ENCODE measurements at regions of chr5 and their contacts with region 1.

Region 1: GRCh38 chr5:115841382-115842088 is at the starts of genes AP3S1 and ATG12:
- DNase-seq: peak; percentile 95
- H3K4me3 ChIP-seq: peak within 1 kb of the TSS; percentile 90
- H3K27ac ChIP-seq: peak within 1 kb of the TSS; percentile 80
- H3K4me1 ChIP-seq: peaks cover 57% of the 10 kb centered on the region
- CTCF ChIP-seq: no peak
- total RNA-seq, gene AP3S1: 76.0 and 111 TPM in 2 replicates
- total RNA-seq, gene ATG12: 38.0 and 52.1 TPM in 2 replicates

Region 2: GRCh38 chr5:115296124-115297022 is 545.2 kb before region 1 on chr5 and contains the start of gene CCDC112:
- CTCF ChIA-PET with region 1: no interaction called
- POLR2A ChIA-PET with region 1: no interaction called
- intact Hi-C with region 1: loop called (anchors 5 kb)
- DNase-seq: peak; percentile 79
- H3K4me3 ChIP-seq: peak within 1 kb of the TSS; percentile 83
- H3K27ac ChIP-seq: peak within 1 kb of the TSS; percentile 1
- H3K4me1 ChIP-seq: peaks cover 14% of the 10 kb centered on the region
- CTCF ChIP-seq: no peak
- total RNA-seq, gene CCDC112: 15.8 and 32.8 TPM in 2 replicates

Region 3: DNA sequence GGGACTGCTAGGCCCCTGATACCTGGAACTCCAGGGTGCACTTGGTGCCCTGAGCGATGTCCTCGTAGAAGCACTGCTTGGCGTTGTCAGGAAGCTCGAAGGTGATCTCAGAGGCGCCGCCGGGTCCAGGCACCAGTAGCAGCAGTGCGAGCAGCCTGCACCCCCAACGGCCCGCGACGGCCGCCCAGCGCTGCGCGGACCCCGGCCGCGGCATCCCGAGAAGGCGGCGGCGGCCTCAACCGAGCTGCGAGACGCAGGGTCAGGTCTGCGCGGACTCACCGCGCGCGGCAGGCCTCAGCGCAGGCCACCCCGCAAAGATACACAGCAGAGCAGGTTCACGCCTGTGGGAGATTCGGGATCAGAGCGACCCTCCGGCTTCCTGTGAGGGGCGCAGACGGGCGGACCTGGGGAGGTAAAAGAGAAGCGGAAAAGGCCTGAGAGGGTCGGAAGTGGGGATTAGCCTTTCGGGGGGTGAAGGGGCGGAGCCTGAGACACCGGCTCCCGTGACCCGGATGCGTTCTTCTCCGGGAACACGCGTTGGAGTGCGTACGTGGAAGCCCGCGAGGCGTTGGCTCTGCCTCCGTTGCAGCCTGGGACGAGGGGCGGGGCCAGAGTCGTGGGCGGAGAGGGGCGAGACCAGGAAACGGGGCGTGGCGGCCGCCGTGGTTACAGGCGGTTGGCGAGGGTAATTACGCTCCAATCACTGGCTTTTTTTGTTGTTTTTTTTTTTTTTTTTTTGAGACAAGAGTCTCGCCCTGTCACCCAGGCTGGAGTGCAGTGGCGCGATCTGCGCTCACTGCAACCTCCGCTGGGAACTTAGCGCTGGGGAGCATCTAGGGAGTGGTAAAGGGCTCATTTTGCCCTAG is 215.7 kb before region 1 on chr5 and contains the start of gene TMED7:
- CTCF ChIA-PET with region 1: no interaction called
- POLR2A ChIA-PET with region 1: interaction called, 6 read pairs
- intact Hi-C with region 1: loop called (anchors 2 kb)
- DNase-seq: peak; percentile 98
- H3K4me3 ChIP-seq: peak within 1 kb of the TSS; percentile 94
- H3K27ac ChIP-seq: peak within 1 kb of the TSS; percentile 70
- H3K4me1 ChIP-seq: peaks cover 39% of the 10 kb centered on the region
- CTCF ChIP-seq: 0 out of 2 replicates have a peak, but pooled peaks have one; percentile 17
- total RNA-seq, gene TMED7: 50.9 and 55.1 TPM in 2 replicates

Region 4: DNA sequence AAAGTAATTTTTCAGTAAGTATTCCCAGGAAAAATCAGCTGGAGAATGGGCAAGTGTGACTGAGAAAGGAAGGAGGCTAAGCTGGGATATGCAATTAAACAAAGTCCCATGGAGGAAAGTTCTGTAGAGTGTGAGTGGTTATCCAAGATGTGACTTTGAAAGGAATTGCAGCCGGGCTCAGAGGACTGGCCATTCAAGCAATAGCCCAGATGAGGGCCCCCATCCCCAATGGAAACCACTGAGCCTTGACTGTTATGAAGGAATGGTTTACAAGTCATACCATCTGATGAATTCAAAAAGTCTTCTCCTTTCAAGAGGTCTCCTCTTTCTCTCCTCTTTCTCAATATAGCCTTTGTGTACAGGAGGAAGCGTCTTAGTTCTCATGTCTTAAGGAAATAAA is 127.2 kb after region 1 on chr5:
- CTCF ChIA-PET with region 1: no interaction called
- POLR2A ChIA-PET with region 1: no interaction called
- intact Hi-C with region 1: no loop called
- DNase-seq: no peak
- H3K4me3 ChIP-seq: no peak overlapping the region
- H3K27ac ChIP-seq: no peak overlapping the region
- H3K4me1 ChIP-seq: no peaks in the 10 kb centered on the region
- CTCF ChIP-seq: no peak

Region 5: GRCh38 chr5:116038817-116039216 is 197.3 kb after region 1 on chr5:
- CTCF ChIA-PET with region 1: no interaction called
- POLR2A ChIA-PET with region 1: interaction called, 4 read pairs
- intact Hi-C with region 1: loop called (anchors 5 kb)
- DNase-seq: peak; percentile 75
- H3K4me3 ChIP-seq: peak overlapping the region; percentile 12
- H3K27ac ChIP-seq: peak overlapping the region; percentile 6
- H3K4me1 ChIP-seq: peaks cover 20% of the 10 kb centered on the region
- CTCF ChIP-seq: no peak